Endothelial cell of umbilical vein (primary cell): ENCODE measurements at regions of chr9 and their contacts with region 1.

Region 1: DNA sequence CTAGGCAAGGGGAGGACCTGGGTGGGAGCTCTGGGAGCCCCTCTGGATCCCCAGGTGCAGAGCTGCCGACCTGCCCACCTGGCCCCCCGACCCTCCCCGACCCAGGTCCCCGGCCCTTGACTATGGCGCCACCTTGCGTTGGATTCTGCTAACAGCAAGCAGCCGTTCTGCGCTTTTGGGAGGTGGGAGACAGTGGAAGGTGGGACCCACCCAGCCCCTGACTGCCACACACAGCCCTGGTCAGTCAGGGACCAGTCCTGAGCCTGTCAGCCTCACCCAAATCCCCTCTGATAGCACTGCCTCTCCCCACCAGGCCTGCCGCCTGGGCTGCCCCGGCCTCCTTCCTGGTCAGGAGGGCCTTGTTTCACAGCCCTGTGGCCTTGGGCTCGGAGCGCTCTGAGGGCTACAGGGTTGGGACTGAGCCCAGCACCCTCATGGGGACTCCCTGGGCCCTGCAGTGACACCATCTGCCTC is 77.9 kb downstream of the HMCN2 start:
- DNase-seq: no peak
- H3K4me3 ChIP-seq: no peak overlapping the region
- H3K27ac ChIP-seq: no peak overlapping the region
- H3K4me1 ChIP-seq: no peaks in the 10 kb centered on the region
- H3K27me3 ChIP-seq: no peaks in the 10 kb centered on the region
- CTCF ChIP-seq: peak; percentile 61 to 82
- POLR2A ChIP-seq: no peak

Region 2: DNA sequence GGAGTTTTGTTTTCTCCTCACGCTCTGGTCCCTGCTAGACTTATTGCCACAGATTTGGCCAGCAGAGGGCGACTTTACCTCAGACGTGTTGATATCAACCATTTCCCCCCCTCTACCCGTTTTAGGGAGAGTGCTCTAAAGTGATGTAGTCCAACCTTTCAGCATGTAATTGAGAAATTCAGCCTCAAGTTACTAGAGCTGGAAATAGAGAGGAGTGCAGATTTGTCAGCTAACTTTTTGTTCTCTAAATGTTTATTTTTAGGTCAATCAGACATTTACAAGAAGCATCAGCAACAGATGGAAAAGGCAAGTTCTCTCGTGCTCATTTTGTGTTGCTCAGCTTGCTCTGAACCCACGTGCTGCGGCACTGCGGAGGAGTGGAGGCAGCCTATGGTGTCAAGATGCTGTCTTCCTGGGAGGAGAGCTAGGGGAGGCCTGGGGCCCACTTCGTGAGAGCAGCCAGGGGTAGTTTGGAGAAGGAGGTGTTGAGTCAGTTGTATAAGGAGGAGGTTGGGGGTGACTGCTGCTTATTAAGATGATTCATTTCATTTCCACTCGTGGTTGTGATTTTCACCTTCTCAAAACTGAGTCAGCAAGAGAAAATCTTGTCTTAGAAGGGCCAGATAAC is 236.1 kb before region 1 on chr9:
- CTCF ChIA-PET with region 1: interaction called, 21 read pairs
- POLR2A ChIA-PET with region 1: no interaction called
- dilution Hi-C with region 1: no loop called
- intact Hi-C with region 1: loop called (anchors 1 kb)
- DNase-seq: peak; percentile 66
- H3K4me3 ChIP-seq: no peak overlapping the region
- H3K27ac ChIP-seq: no peak overlapping the region
- H3K4me1 ChIP-seq: peaks cover 5% of the 10 kb centered on the region
- H3K27me3 ChIP-seq: no peaks in the 10 kb centered on the region
- CTCF ChIP-seq: peak; percentile 68 to 77
- POLR2A ChIP-seq: no peak

Region 3: GRCh38 chr9:130235897-130236668 is 107.4 kb before region 1 on chr9:
- CTCF ChIA-PET with region 1: interaction called, 8 read pairs
- POLR2A ChIA-PET with region 1: no interaction called
- dilution Hi-C with region 1: no loop called
- intact Hi-C with region 1: loop called (anchors 1 kb)
- DNase-seq: peak; percentile 49
- H3K4me3 ChIP-seq: no peak overlapping the region
- H3K27ac ChIP-seq: no peak overlapping the region
- H3K4me1 ChIP-seq: peaks cover 8% of the 10 kb centered on the region
- H3K27me3 ChIP-seq: no peaks in the 10 kb centered on the region
- CTCF ChIP-seq: peak; percentile 94 to 98
- POLR2A ChIP-seq: no peak

Region 4: GRCh38 chr9:130243015-130243734 is 100.3 kb before region 1 on chr9:
- CTCF ChIA-PET with region 1: interaction called, 4 read pairs
- POLR2A ChIA-PET with region 1: no interaction called
- dilution Hi-C with region 1: no loop called
- intact Hi-C with region 1: loop called (anchors 2 kb)
- DNase-seq: peak; percentile 35
- H3K4me3 ChIP-seq: no peak overlapping the region
- H3K27ac ChIP-seq: no peak overlapping the region
- H3K4me1 ChIP-seq: no peaks in the 10 kb centered on the region
- H3K27me3 ChIP-seq: no peaks in the 10 kb centered on the region
- CTCF ChIP-seq: peak; percentile 78 to 80
- POLR2A ChIP-seq: no peak

Region 5: DNA sequence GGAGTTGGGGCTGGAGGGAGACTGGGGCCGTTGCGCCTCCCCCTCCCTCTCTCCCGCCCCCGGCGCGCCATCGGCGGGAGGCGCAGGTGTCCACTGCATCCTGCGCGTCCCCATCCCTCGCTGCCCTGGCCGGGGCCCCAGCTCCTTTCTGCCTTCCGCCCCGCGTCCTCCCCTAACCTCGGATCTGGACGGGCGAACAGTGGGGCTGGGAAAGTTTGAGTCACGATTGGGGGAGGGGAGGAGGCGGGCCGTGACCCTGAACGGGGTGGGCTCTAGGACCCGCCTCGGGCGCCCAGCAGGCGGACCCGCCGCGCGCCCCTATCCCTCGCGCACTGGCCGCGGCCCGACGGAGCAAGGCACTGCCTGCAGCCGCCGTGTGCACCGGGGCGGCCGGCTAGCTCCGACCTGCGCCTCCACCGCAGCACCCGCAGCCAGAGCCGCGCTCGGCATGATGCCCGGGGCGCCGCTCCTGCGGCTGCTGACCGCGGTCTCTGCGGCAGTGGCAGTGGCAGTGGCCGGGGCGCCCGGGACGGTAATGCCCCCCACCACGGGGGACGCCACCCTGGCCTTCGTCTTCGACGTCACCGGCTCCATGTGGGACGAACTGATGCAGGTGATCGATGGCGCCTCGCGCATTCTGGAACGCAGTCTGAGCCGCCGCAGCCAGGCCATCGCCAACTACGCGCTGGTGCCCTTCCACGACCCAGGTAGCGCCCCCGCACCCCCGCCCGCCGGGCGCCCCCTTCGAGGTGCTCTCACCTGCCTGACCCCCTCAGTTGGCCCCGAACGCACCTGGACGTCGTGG is 77.8 kb before region 1 on chr9 and contains the start of gene HMCN2:
- CTCF ChIA-PET with region 1: interaction called, 8 read pairs
- POLR2A ChIA-PET with region 1: no interaction called
- dilution Hi-C with region 1: no loop called
- intact Hi-C with region 1: loop called (anchors 2 kb)
- DNase-seq: no peak
- H3K4me3 ChIP-seq: no peak within 1 kb of the TSS
- H3K27ac ChIP-seq: no peak within 1 kb of the TSS
- H3K4me1 ChIP-seq: peaks cover 4% of the 10 kb centered on the region
- H3K27me3 ChIP-seq: peaks cover 45 to 51% of the 10 kb centered on the region in 2 experiments
- CTCF ChIP-seq: no peak
- POLR2A ChIP-seq: no peak
- total RNA-seq, gene HMCN2: 0.18 and 0.24 TPM in 2 replicates